Calu3 (cell line): ENCODE measurements at regions of chr17 and their contacts with region 1.

Region 1: DNA sequence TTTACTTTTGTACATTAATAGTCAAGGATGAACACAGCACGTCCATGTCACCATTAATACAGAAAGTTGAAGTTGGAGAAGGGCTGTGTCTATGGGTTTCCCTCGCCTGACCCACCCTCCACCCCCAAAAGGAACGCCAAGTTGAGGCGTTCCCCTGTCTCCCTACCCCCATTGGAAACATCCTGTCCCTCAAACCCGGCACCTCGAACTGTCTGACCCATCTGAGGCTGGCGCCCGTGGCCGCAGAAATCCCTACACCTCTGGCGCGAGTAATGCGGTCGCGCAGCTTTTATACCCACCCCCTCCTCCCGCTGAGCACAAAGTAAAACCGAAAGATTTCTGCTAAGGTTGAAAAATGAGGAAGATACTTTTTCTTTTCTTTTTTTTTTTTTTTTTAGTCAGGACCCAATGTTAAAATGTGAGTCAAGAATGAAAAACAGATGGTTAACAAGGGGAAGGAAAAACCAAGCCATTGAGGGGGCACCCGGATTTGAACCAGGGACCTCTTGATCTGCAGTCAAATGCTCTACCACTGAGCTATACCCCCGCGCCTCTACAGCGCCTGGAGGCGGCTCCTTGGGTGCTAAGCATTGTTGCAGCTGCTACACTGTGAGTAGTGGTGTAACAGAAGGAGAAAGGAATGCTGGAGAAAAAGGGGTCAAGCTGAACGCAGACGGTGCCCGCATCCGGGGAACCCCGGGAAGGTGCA is 887 bp upstream of the LASP1 start:
- DNase-seq: peak; percentile 100
- H3K4me3 Mint-ChIP-seq: peak overlapping the region; percentile 95
- H3K27ac Mint-ChIP-seq: peak overlapping the region; percentile 97
- H3K4me1 Mint-ChIP-seq: peaks cover 51% of the 10 kb centered on the region
- H3K27me3 Mint-ChIP-seq: no peaks in the 10 kb centered on the region
- CTCF ChIP-seq: no peak

Region 2: DNA sequence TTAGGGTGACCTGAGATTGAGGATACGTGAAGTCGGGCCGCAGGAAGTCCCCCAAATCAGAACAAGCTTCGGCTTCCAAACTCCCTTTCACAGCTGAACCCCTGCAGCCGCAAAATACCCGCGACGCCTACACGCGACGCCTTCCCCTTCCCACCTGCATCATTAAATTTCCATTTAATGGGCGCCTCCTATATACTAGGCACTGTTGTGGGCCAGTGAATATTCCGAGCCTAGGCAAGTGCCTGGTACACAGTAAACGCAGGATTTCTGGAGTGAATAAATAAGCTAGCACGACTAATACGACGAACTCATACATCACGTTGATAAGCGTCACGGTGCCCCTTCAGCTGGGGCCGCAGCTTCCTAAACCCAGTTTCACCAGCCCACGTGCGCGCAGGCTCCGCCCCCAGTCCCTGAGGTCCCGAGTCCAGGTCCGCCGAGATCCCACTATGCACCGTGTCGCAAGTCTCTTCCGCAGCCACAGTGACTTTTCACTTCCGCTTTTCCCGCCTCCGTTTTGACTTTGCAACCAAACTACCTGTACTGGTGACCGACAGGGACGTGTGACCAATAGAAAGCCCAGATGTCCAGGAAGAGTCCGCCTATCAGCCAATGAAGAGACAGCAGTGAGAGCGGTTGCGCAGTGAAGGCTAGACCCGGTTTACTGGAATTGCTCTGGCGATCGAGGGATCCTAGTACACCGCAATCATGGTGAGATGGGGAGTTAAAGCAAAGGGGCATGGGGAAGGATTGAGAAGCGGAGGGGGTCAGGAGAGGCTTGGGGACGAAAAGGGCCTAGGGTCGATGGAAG is 116.6 kb before region 1 on chr17 and contains the start of gene PSMB3:
- CTCF ChIA-PET with region 1: interaction called, 6 read pairs
- intact Hi-C with region 1: loop called (anchors 5 kb)
- DNase-seq: peak; percentile 100
- H3K4me3 Mint-ChIP-seq: peak within 1 kb of the TSS; percentile 78
- H3K27ac Mint-ChIP-seq: peak within 1 kb of the TSS; percentile 85
- H3K4me1 Mint-ChIP-seq: peaks cover 28% of the 10 kb centered on the region
- H3K27me3 Mint-ChIP-seq: no peaks in the 10 kb centered on the region
- CTCF ChIP-seq: no peak
- total RNA-seq, gene PSMB3: 893 and 935 TPM in 2 replicates

Region 3: DNA sequence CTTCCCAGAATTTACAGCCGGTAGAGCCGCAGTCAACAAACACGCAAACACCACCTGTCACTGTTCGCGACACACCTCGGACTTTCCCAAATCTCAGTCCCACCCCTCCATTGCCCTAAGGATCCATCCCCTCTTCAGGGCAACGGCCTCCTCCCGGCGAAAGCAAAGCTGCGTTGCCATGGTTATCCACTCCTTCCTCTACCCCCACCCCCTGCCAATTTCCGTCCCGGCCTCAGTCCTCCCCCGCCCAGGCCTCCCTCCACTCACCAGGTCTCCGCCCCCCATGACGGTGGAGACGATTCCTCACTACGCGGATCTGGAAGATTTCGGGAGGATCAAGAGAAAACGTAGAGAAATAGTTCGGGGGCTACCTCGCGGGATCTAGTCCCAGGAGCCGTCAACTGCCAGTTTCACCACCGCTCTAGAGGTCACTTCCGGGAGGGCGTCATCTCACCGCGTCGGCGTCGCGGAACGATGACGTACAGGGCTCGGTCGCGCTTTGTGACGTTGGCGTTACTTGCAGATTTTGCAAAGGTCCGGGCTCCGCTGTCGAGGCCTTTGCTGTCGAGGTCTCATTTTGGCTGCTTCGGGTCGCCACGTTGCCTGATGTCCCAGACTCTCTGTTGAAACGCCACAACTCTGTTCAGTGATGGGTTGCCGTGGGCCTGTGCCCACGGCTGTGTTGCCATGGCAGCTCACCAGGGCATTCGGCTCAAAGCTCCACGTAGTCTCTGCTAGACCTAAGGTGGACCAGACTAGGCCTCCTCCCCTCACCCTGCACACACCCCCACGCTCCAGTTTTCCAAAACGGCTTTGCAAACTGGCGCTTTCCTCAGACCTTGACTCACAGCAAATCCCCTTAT is 43.8 kb before region 1 on chr17 and contains the start of gene CWC25:
- CTCF ChIA-PET with region 1: interaction called, 15 read pairs
- intact Hi-C with region 1: no loop called
- DNase-seq: peak; percentile 100
- H3K4me3 Mint-ChIP-seq: peak within 1 kb of the TSS; percentile 87
- H3K27ac Mint-ChIP-seq: peak within 1 kb of the TSS; percentile 100
- H3K4me1 Mint-ChIP-seq: peaks cover 37% of the 10 kb centered on the region
- H3K27me3 Mint-ChIP-seq: no peaks in the 10 kb centered on the region
- CTCF ChIP-seq: no peak
- total RNA-seq, gene CWC25: 77.8 and 78.9 TPM in 2 replicates

Region 4: GRCh38 chr17:38879878-38880682 is 11.1 kb after region 1 on chr17:
- CTCF ChIA-PET with region 1: interaction called, 38 read pairs
- intact Hi-C with region 1: no loop called
- DNase-seq: peak; percentile 93
- H3K4me3 Mint-ChIP-seq: peak overlapping the region; percentile 63
- H3K27ac Mint-ChIP-seq: peak overlapping the region; percentile 82
- H3K4me1 Mint-ChIP-seq: peaks cover 93% of the 10 kb centered on the region
- H3K27me3 Mint-ChIP-seq: no peaks in the 10 kb centered on the region
- CTCF ChIP-seq: no peak

Region 5: GRCh38 chr17:39144416-39144840 is 275.5 kb after region 1 on chr17:
- CTCF ChIA-PET with region 1: interaction called, 10 read pairs
- intact Hi-C with region 1: no loop called
- DNase-seq: peak; percentile 87
- H3K4me3 Mint-ChIP-seq: no peak overlapping the region
- H3K27ac Mint-ChIP-seq: no peak overlapping the region
- H3K4me1 Mint-ChIP-seq: peaks cover 11% of the 10 kb centered on the region
- H3K27me3 Mint-ChIP-seq: peaks cover 47% of the 10 kb centered on the region
- CTCF ChIP-seq: no peak